Aorta (tissue), 5 donors: ENCODE measurements at regions of chr9 and their contacts with region 1.

Region 1: DNA sequence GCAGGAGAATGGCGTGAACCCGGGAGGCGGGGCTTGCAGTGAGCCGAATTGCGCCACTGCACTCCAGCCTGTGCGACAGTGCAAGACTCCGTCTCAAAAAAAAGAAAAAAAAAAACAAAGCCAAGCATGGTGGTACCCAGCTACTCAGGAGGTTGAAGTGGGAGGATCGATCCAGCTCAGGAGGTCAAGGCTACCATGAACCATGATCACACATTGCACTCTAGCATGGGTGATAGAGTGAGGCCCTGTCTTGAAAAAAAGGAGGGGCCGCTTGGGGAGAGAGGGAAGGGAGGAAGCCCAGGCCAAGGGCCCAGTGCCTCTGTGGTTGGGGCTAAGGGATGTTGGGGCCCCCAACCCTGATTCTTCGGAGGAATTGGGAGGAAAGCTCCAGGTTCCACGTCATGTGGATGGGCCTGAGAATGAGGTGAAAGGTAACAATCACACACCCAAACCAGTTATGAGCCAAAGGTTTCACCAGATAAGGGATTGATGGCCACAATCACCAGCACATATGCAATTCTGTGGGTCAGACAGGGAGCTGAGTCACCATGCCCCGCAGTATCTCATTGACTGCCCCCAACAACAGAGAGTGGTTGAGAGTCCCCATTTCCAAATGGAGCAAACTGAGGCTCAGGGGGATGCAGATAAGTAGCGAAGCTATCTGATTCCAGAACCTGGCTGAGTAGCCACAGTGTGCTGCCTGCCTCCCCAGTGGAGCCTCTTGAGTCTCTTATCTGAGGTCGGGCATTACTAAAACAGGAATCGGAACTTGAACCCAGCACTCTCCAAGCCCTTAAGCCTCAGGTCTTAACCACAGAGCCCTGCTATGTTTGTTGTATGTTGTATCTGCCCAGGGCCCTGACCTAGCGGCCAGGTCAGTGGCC is 20.5 kb downstream of the SWI5 start:
- DNase-seq: no peak
- ATAC-seq: no peak
- H3K4me3 ChIP-seq: no peak overlapping the region
- H3K27ac ChIP-seq: no peak overlapping the region
- H3K4me1 ChIP-seq: no peaks in the 10 kb centered on the region
- H3K27me3 ChIP-seq: no peaks in the 10 kb centered on the region

Region 2: DNA sequence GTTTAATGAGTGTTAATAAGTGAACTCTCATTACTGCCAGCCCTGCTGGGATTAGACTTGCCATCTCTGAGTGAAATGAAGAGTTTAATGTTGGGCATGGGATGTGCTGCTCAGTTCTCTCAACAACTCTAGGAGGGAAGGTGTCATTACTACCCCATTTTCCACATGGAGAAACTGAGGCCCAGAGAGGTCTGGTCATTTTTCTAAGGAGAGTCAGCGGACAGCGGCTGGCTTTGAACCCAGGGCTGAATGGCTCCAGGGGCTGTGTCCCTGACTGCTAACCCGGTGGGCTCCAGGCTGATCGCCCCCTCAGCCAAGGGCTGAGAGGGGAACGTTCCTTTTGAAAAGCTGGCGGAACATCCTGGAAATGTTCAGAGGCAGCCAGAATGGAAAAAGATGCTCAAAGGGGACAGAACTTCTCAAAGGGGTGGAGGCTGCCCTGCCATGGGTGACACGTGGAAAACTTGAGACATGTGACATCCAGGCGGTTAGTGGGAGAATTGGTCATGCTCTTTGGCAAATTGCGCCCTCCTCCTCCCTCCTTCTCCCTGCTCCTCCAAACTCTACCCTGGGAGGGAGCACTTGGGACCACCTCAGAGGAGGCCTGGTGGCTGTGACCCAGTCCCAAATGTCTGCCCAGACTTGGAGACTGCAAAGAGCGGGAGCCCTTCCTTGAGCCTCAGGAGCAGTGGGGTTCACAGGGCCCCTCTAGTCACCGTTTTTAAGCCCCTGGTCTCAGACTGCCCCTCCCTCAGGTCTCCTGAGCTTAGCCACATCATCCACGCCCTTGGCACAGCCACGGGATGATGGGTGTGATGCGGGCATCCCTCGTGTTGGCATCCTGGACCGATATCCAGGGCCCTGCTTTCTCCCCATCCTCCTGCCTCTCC is 64.7 kb before region 1 on chr9:
- intact Hi-C with region 1: no loop called
- DNase-seq: peak in 1 of 2 donors; percentile 63
- ATAC-seq: peak; percentile 70
- H3K4me3 ChIP-seq: no peak overlapping the region
- H3K27ac ChIP-seq: no peak overlapping the region
- H3K4me1 ChIP-seq: no peaks in the 10 kb centered on the region
- H3K27me3 ChIP-seq: no peaks in the 10 kb centered on the region

Region 3: GRCh38 chr9:128333451-128333869 is 36.9 kb after region 1 on chr9:
- intact Hi-C with region 1: loop called in 1 of 2 experiments (anchors 5 kb)
- DNase-seq: no peak
- ATAC-seq: no peak
- H3K4me3 ChIP-seq: no peak overlapping the region
- H3K27ac ChIP-seq: no peak overlapping the region
- H3K4me1 ChIP-seq: no peaks in the 10 kb centered on the region
- H3K27me3 ChIP-seq: no peaks in the 10 kb centered on the region

Region 4: GRCh38 chr9:128339771-128340690 is 43.5 kb after region 1 on chr9 and contains the start of gene SLC27A4:
- intact Hi-C with region 1: loop called in 1 of 2 experiments (anchors 10 kb)
- DNase-seq: peak; percentile 82 to 90
- ATAC-seq: peak; percentile 91
- H3K4me3 ChIP-seq: peak within 1 kb of the TSS; percentile 15 to 82
- H3K27ac ChIP-seq: no peak within 1 kb of the TSS
- H3K4me1 ChIP-seq: no peaks in the 10 kb centered on the region
- H3K27me3 ChIP-seq: no peaks in the 10 kb centered on the region
- total RNA-seq, gene SLC27A4: 13.3 to 15.3 TPM

Region 5: DNA sequence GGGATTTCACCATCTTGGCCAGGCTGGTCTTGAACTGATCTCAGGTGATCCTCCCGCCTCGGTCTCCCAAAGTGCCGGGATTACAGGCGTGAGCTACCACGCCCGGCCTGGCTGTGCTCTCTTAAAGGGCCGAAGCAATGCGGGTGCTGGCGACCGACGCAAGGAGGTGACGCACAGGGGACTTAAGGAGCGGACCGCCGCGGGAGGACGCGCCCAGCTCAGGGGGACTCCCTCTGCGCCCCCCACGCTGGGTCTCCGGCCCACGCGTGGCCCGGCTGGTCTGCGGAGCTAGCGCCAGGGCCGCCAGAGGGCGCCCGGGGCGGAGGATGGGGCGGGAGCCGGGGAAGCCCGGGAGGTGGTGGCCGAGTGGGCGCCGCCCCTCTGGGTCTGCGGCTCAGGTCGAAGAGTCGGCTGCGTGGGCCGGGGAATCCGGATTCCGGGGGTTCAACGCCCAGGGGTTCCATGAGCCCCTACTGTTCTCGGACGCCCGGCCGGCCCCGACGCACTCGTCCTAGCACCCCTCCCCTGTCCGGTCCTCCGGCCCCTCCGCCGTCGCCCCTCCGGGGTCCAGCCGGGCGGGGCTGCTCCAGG is 123.6 kb after region 1 on chr9:
- intact Hi-C with region 1: loop called in 1 of 2 experiments (anchors 10 kb)
- DNase-seq: peak; percentile 82 to 94
- ATAC-seq: peak; percentile 92
- H3K4me3 ChIP-seq: peak overlapping the region; percentile 78 to 87
- H3K27ac ChIP-seq: peak overlapping the region in 1 of 2 donors; percentile 13
- H3K4me1 ChIP-seq: no peaks in the 10 kb centered on the region
- H3K27me3 ChIP-seq: no peaks in the 10 kb centered on the region